OCI-LY7 (cell line): ENCODE measurements at regions of chr16 and their contacts with region 1.

Region 1: DNA sequence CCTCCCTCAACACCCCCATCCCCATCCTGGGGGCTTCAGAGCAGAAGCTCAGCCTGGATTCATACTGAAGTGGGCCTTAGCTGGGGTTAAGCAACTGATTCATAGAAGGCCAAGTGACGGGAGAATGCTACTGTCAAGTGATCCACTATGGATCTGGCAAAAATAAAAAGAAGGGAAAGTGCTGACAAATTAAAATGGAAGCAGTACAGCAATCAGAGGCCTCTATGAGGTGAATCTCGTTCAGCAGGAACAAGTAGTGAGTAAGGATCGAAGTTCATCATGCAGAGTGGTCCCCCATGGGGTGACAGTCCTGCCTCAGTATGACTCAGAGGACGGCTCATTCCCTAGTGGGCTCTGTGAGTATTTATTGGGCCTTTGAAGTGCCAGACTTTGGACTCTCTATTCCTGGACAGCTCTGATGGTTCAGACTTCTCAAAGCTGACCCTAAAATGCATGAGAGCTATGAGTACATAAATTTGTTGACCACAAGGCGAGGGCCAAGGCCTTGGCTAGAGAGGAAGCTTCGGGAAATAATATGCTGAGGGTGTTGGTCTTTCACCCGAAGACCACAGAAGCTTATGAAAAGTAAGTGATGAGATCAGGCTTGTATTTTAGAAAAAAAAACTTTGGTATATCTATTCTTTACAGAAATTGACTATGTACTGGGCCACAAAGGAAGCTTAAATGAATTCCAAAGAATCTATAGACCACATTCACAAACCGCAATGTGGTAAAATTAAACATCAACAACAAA is 5.3 kb upstream of the NSMCE1 start:
- DNase-seq: no peak
- H3K4me3 ChIP-seq: peak overlapping the region; percentile 16
- H3K27ac ChIP-seq: peak overlapping the region; percentile 89
- H3K4me1 ChIP-seq: peaks cover 68% of the 10 kb centered on the region
- CTCF ChIP-seq: peak; percentile 38; the same call in 1 of the 2 replicates

Region 2: DNA sequence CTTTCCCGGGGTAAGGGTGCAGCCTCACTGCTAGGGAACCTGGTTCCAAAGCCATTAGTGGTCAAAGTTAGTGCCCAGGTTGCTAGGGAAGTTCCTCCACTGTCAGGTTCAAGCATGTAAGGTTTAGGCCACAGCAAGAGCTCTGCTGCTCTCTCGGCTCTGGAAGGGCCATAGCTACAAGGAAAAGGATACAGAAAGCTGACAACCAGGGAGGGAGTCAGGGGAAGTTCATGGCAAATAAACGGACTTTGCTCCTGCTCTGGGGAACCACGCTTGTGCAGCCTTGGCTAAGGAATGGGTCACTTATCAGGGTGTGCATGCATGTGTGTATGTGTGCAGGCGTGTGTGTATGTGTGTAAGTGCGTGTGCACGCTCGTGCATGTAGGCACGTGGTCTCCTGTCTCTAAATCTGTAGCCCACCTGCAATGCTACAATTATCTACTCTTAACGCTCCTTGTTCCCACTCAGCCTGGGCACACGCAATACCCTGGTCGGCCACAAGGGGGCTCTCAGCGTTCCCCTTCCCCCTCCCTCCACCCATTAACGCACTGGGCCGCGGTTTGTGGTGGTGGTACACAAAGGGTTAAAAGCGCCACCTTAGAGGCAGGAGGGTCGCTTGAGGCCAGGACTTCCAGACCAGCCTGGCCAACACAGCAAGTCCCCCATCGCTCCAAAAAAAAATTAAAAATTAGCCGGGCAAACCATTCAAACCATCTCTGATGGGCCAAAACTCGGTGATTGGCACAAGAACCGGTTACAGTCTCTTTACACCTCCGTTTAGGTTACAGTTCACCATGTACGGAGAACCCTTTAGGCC is 118.9 kb before region 1 on chr16:
- CTCF ChIA-PET with region 1: no interaction called
- POLR2A ChIA-PET with region 1: no interaction called
- intact Hi-C with region 1: no loop called
- DNase-seq: peak; percentile 68
- H3K4me3 ChIP-seq: no peak overlapping the region
- H3K27ac ChIP-seq: no peak overlapping the region
- H3K4me1 ChIP-seq: peaks cover 12% of the 10 kb centered on the region
- CTCF ChIP-seq: peak; percentile 98

Region 3: GRCh38 chr16:27301236-27301861 is 27.5 kb after region 1 on chr16:
- CTCF ChIA-PET with region 1: interaction called, 3 read pairs
- POLR2A ChIA-PET with region 1: interaction called, 15 read pairs
- intact Hi-C with region 1: loop called (anchors 2 kb)
- DNase-seq: no peak
- H3K4me3 ChIP-seq: peak overlapping the region; percentile 0
- H3K27ac ChIP-seq: peak overlapping the region; percentile 86
- H3K4me1 ChIP-seq: peaks cover 82% of the 10 kb centered on the region
- CTCF ChIP-seq: no peak

Region 4: GRCh38 chr16:27374804-27375425 is 101.1 kb after region 1 on chr16:
- CTCF ChIA-PET with region 1: no interaction called
- POLR2A ChIA-PET with region 1: no interaction called
- intact Hi-C with region 1: no loop called
- DNase-seq: peak; percentile 68
- H3K4me3 ChIP-seq: peak overlapping the region; percentile 43
- H3K27ac ChIP-seq: peak overlapping the region; percentile 70
- H3K4me1 ChIP-seq: peaks cover 55% of the 10 kb centered on the region
- CTCF ChIP-seq: peak; percentile 75